ENCODE measurements at regions of chr14 and their contacts with region 1.

Region 1: GRCh38 chr14:78022059-78022458 is 148.1 kb upstream of the NRXN3 start:
- DNase-seq: peak; percentile 88
- ATAC-seq: peak; percentile 88
- H3K4me3 Mint-ChIP-seq: no peak overlapping the region
- H3K27ac Mint-ChIP-seq: no peak overlapping the region
- H3K4me1 Mint-ChIP-seq: no peaks in the 10 kb centered on the region
- H3K27me3 Mint-ChIP-seq: peaks cover 19% of the 10 kb centered on the region

Region 2: GRCh38 chr14:77980475-77981321 is 41.4 kb before region 1 on chr14:
- CTCF ChIA-PET with region 1: no interaction called
- POLR2A ChIA-PET with region 1: no interaction called
- intact Hi-C with region 1: no loop called
- DNase-seq: peak; percentile 24
- ATAC-seq: peak; percentile 44
- H3K4me3 Mint-ChIP-seq: peak overlapping the region; percentile 40
- H3K27ac Mint-ChIP-seq: no peak overlapping the region
- H3K4me1 Mint-ChIP-seq: peaks cover 5% of the 10 kb centered on the region
- H3K27me3 Mint-ChIP-seq: peaks cover 26% of the 10 kb centered on the region

Region 3: DNA sequence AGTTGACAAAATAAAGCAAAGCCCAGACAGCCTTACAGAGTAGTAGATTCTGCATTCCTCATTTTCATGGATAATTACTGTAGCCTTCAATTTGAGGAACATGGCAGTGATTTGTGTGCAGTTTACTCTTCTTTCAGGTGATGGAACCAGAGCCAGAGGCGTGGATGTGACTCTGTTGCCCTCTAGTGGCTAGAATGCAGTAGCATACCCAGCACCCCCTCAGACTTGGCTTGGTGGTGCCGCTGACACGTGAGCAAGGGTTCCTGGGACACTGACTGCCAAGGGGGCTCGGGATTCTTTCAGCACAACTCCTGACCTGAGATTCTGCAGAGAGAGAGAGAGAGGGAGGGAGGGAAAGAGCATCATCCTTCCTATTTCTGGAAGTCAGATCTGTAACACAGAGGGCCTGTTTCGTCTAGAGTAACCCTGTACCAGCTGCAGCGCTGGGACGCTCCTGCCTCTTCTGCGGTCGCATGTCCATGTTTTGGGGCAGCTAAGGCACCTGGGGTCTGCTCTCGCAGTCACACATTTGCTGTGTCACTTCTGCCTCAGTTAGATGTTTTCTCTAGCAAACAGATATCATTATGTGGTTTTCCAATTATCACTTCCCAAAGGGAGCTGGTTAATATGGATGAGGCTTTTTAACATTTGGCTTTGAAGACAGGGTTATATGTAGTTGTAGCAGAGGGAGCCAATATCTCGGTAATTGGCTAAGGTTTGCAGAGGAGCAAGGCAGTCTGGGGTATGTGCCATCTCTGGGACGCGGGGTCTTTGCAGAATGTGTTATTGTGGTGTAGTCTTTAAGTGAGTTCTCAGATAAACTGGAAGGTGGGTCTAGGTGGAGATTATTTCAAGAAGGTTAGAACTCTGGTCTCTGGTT is 576.2 kb after region 1 on chr14:
- CTCF ChIA-PET with region 1: interaction called, 5 read pairs
- POLR2A ChIA-PET with region 1: no interaction called
- intact Hi-C with region 1: loop called (anchors 1 kb)
- DNase-seq: peak; percentile 67
- ATAC-seq: peak; percentile 88
- H3K4me3 Mint-ChIP-seq: no peak overlapping the region
- H3K27ac Mint-ChIP-seq: no peak overlapping the region
- H3K4me1 Mint-ChIP-seq: no peaks in the 10 kb centered on the region
- H3K27me3 Mint-ChIP-seq: peaks cover 22% of the 10 kb centered on the region

Region 4: DNA sequence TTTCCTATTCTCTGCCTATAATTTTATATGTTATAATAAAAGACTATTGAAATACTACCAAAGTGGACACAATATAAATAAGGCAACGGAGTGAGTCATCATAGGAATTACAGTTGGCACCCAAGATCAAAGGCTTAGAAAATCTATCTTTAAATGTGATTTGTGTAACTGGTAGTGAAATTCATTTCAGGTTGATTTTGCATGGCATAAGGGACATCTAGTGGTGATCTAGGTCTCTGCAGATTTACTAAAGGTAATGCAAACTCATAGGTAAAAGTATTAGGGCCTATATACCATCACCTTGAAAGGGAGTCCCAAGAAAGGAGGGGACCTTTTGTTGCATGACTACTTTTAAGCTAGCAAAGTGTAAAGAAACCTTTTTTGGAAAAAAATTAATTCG is 675.3 kb after region 1 on chr14:
- CTCF ChIA-PET with region 1: interaction called, 3 read pairs
- POLR2A ChIA-PET with region 1: no interaction called
- intact Hi-C with region 1: loop called in 1 of 2 experiments (anchors 5 kb)
- DNase-seq: no peak
- ATAC-seq: no peak
- H3K4me3 Mint-ChIP-seq: no peak overlapping the region
- H3K27ac Mint-ChIP-seq: no peak overlapping the region
- H3K4me1 Mint-ChIP-seq: no peaks in the 10 kb centered on the region
- H3K27me3 Mint-ChIP-seq: peaks cover 4% of the 10 kb centered on the region

Region 5: DNA sequence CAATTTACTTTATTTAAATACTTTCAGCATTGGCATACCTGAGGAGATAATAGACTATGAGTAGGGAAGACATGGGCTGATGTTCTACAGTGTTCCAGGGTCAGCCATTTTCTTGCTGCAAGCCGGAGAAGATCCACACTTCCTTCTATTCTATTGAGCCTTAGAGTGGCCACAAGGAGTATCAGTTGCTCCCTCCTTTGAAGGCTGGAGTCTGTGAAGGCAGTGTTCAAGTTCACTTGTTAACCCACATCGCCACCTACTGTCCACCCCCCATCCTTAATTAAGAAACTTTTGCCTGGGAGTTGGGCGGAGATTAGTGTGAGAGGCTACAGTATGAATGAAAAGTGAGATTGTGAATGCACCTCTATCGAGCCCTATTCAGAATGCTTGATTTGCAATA is 814.7 kb after region 1 on chr14:
- CTCF ChIA-PET with region 1: interaction called, 3 read pairs
- POLR2A ChIA-PET with region 1: no interaction called
- intact Hi-C with region 1: loop called in 1 of 2 experiments (anchors 10 kb)
- DNase-seq: peak; percentile 52
- ATAC-seq: no peak
- H3K4me3 Mint-ChIP-seq: no peak overlapping the region
- H3K27ac Mint-ChIP-seq: no peak overlapping the region
- H3K4me1 Mint-ChIP-seq: no peaks in the 10 kb centered on the region
- H3K27me3 Mint-ChIP-seq: peaks cover 6% of the 10 kb centered on the region

Measured in activated CD4-positive, alpha-beta T cell treated with anti-CD3 and anti-CD28 coated beads for 36 hours (primary cell).